Activated CD8-positive, alpha-beta memory T cell treated with anti-CD3 and anti-CD28 coated beads, Interleukin-2, amount 10 ng/mL, durations not matched to agents 7 days and 5 days (primary cell): ENCODE measurements at regions of chr11 and their contacts with region 1.

Region 1: GRCh38 chr11:45771566-45772448 is 33.1 kb upstream of the SLC35C1 start:
- DNase-seq: peak; percentile 86
- ATAC-seq: peak; percentile 91
- H3K4me3 Mint-ChIP-seq: peak overlapping the region; percentile 80
- H3K27ac Mint-ChIP-seq: peak overlapping the region; percentile 44
- H3K4me1 Mint-ChIP-seq: peaks cover 14% of the 10 kb centered on the region
- H3K27me3 Mint-ChIP-seq: peaks cover 6% of the 10 kb centered on the region

Region 2: GRCh38 chr11:45332276-45332934 is 439.4 kb before region 1 on chr11:
- CTCF ChIA-PET with region 1: interaction called, 25 read pairs
- DNase-seq: no peak
- ATAC-seq: peak; percentile 20
- H3K4me3 Mint-ChIP-seq: no peak overlapping the region
- H3K27ac Mint-ChIP-seq: no peak overlapping the region
- H3K4me1 Mint-ChIP-seq: no peaks in the 10 kb centered on the region
- H3K27me3 Mint-ChIP-seq: peaks cover 19% of the 10 kb centered on the region

Region 3: GRCh38 chr11:45371251-45372115 is 400.3 kb before region 1 on chr11:
- CTCF ChIA-PET with region 1: interaction called, 35 read pairs
- DNase-seq: peak; percentile 68
- ATAC-seq: peak; percentile 59
- H3K4me3 Mint-ChIP-seq: no peak overlapping the region
- H3K27ac Mint-ChIP-seq: no peak overlapping the region
- H3K4me1 Mint-ChIP-seq: peaks cover 8% of the 10 kb centered on the region
- H3K27me3 Mint-ChIP-seq: peaks cover 18% of the 10 kb centered on the region

Region 4: GRCh38 chr11:45671246-45672171 is 100.3 kb before region 1 on chr11:
- CTCF ChIA-PET with region 1: no interaction called
- DNase-seq: no peak
- ATAC-seq: no peak
- H3K4me3 Mint-ChIP-seq: no peak overlapping the region
- H3K27ac Mint-ChIP-seq: no peak overlapping the region
- H3K4me1 Mint-ChIP-seq: no peaks in the 10 kb centered on the region
- H3K27me3 Mint-ChIP-seq: peaks cover 29% of the 10 kb centered on the region

Region 5: DNA sequence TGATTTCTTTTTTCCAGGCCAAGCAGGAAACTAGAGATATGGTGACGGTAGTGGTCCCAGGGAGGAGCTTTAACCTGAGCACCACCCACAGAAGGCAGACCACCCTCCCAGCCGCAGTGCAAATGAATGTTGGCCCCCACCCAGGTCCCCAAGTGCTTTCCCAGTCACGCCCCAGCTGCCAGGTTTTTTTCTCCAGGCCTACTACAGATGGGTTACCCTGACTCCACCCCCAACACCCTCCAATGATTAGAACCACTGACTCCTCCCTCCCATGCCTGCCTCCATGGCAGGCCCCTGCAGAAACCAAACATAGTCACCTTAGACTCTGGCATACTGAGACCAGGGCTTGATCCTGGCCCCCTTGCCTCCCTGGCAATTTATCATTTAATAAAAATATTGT is 47.7 kb before region 1 on chr11:
- CTCF ChIA-PET with region 1: no interaction called
- DNase-seq: no peak
- ATAC-seq: no peak
- H3K4me3 Mint-ChIP-seq: no peak overlapping the region
- H3K27ac Mint-ChIP-seq: no peak overlapping the region
- H3K4me1 Mint-ChIP-seq: no peaks in the 10 kb centered on the region
- H3K27me3 Mint-ChIP-seq: peaks cover 25% of the 10 kb centered on the region

Region 6: DNA sequence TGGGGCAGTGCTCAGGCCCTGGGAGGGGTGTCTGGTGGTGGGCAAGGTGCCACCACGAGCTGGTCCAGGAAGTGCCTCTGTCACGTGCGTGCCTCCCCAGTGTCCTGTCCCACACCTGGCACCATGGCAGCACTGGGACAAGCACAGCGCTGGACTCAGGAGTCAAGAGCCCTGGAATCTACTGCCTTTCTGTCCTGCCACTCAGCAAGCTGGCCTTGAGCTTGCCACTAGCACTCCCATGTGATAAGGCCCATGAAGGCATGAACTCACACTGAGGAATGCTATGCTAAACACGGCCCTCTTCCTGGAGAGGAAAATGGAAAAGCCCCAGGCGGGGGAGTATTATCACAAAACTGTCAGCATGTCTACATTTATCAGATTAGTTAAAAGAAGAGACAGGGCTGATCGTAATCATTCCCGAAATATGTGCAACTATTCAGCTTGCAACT is 17.5 kb before region 1 on chr11:
- CTCF ChIA-PET with region 1: interaction called, 10 read pairs
- DNase-seq: no peak
- ATAC-seq: no peak
- H3K4me3 Mint-ChIP-seq: no peak overlapping the region
- H3K27ac Mint-ChIP-seq: no peak overlapping the region
- H3K4me1 Mint-ChIP-seq: no peaks in the 10 kb centered on the region
- H3K27me3 Mint-ChIP-seq: peaks cover 30% of the 10 kb centered on the region

Region 7: DNA sequence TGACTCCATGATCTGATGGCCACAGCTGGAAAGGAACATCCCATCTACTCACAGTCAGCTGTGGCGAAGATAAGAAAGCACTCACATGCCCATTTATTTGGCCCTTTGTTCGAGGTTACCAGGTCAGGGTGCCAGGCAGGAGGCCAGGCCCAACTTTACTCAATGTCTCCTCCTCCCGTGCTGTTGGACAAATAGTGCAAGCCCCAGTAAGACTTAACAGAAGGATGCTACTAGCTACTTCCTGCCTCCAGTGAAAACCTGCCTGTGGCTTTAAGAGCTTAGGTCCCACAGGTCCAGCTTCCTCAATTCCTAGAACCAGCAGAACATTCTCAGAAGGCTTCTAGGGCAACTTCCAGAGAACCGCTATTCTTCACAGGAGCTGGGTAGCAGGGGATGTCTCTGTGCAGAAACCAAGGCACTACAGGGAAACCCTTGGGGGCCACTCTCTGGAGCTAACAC is 62.5 kb after region 1 on chr11:
- CTCF ChIA-PET with region 1: interaction called, 21 read pairs
- DNase-seq: peak; percentile 76
- ATAC-seq: peak; percentile 96
- H3K4me3 Mint-ChIP-seq: peak overlapping the region; percentile 76
- H3K27ac Mint-ChIP-seq: peak overlapping the region; percentile 92
- H3K4me1 Mint-ChIP-seq: peaks cover 36% of the 10 kb centered on the region
- H3K27me3 Mint-ChIP-seq: peaks cover 15% of the 10 kb centered on the region